B cell (primary cell): ENCODE measurements at regions of chr7 and their contacts with region 1.

Region 1: DNA sequence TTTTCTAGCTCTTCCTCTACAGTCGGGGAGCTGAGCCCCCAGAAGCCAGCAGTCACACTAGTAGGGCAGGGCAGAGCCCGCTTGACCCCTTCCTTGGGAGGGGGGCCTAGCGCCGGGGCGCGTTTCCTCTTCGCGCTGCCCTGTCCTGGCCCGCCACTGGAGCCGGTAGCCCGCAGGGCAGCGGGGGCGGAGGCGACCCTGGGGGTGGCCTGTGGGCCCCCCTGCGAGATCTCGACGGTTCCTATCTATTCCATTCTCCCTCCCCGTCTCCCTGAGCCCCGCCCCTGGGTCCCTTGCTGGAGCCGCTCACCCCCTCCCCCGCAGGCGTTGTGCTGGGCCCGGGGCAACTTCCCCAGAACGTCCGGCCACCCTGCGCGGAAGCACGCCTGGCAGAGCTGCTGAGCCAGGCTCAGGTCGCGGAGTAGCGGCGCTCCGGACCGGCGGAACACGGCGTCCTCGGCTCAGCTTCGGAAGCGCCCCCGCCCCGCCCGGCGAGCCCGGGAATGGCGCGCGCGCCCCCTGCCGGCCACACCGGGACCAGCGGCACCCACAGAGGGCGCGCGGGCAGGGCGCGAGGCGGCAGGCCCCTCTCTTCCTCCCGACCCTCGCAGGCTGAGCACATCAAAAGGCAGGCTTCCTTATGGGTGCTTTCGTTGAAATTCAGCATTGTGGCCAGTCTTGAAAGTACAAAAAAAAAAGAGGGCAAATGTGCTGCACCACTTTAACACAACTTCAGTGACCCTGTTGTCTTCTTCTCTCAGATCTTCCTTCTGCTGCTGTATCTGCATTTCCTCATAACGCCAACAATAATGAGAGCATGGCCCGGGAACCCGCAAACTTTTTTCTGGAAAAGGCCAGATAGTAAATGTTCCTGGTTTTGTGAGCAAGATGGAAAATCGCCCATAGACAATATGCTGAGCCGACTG is 327.6 kb downstream of the TNS3 start:
- DNase-seq: peak; percentile 81
- ATAC-seq: peak; percentile 85
- H3K4me3 ChIP-seq: peak overlapping the region; percentile 5 to 65 (median 48)
- H3K4me3 Mint-ChIP-seq: peak overlapping the region; percentile 88
- H3K27ac ChIP-seq: peak overlapping the region in 1 of 2 donors; percentile 45
- H3K27ac Mint-ChIP-seq: peak overlapping the region; percentile 73
- H3K4me1 ChIP-seq: peaks cover 16 to 24% of the 10 kb centered on the region in 2 donors
- H3K4me1 Mint-ChIP-seq: peaks cover 25% of the 10 kb centered on the region
- H3K27me3 ChIP-seq: no peaks in the 10 kb centered on the region
- H3K27me3 Mint-ChIP-seq: peaks cover 5% of the 10 kb centered on the region
- CTCF ChIP-seq: peak; percentile 87

Region 2: GRCh38 chr7:46982928-46983327 is 271.4 kb before region 1 on chr7:
- CTCF ChIA-PET with region 1: no interaction called
- POLR2A ChIA-PET with region 1: no interaction called
- intact Hi-C with region 1: no loop called
- DNase-seq: no peak
- ATAC-seq: no peak
- H3K4me3 ChIP-seq: no peak overlapping the region
- H3K4me3 Mint-ChIP-seq: no peak overlapping the region
- H3K27ac ChIP-seq: no peak overlapping the region
- H3K27ac Mint-ChIP-seq: no peak overlapping the region
- H3K4me1 ChIP-seq: no peaks in the 10 kb centered on the region
- H3K4me1 Mint-ChIP-seq: no peaks in the 10 kb centered on the region
- H3K27me3 ChIP-seq: no peaks in the 10 kb centered on the region
- H3K27me3 Mint-ChIP-seq: peaks cover 9% of the 10 kb centered on the region
- CTCF ChIP-seq: no peak

Region 3: GRCh38 chr7:47186316-47186715 is 68.0 kb before region 1 on chr7:
- CTCF ChIA-PET with region 1: no interaction called
- POLR2A ChIA-PET with region 1: no interaction called
- intact Hi-C with region 1: loop called (anchors 5 kb)
- DNase-seq: peak; percentile 75
- ATAC-seq: peak; percentile 82
- H3K4me3 ChIP-seq: no peak overlapping the region
- H3K4me3 Mint-ChIP-seq: no peak overlapping the region
- H3K27ac ChIP-seq: no peak overlapping the region
- H3K27ac Mint-ChIP-seq: peak overlapping the region; percentile 26
- H3K4me1 ChIP-seq: peaks cover 12 to 28% of the 10 kb centered on the region in 2 donors
- H3K4me1 Mint-ChIP-seq: peaks cover 30% of the 10 kb centered on the region
- H3K27me3 ChIP-seq: no peaks in the 10 kb centered on the region
- H3K27me3 Mint-ChIP-seq: peaks cover 16% of the 10 kb centered on the region
- CTCF ChIP-seq: no peak